Left colon (tissue), 2 donors: ENCODE measurements at regions of chr2 and their contacts with region 1.

Region 1: GRCh38 chr2:235595422-235596010 is 101.7 kb downstream of the AGAP1 start:
- DNase-seq: peak; percentile 52 to 72
- ATAC-seq: peak; percentile 66

Region 2: GRCh38 chr2:235421618-235422017 is 173.9 kb before region 1 on chr2:
- intact Hi-C with region 1: no loop called
- DNase-seq: no peak
- ATAC-seq: peak; percentile 23

Region 3: GRCh38 chr2:235669983-235670962 is 74.8 kb after region 1 on chr2:
- intact Hi-C with region 1: loop called in 1 of 2 experiments (anchors 5 kb)
- DNase-seq: peak; percentile 64 to 70
- ATAC-seq: peak; percentile 70